IMR-90 (cell line): ENCODE measurements at regions of chr6 and their contacts with region 1.

Region 1: DNA sequence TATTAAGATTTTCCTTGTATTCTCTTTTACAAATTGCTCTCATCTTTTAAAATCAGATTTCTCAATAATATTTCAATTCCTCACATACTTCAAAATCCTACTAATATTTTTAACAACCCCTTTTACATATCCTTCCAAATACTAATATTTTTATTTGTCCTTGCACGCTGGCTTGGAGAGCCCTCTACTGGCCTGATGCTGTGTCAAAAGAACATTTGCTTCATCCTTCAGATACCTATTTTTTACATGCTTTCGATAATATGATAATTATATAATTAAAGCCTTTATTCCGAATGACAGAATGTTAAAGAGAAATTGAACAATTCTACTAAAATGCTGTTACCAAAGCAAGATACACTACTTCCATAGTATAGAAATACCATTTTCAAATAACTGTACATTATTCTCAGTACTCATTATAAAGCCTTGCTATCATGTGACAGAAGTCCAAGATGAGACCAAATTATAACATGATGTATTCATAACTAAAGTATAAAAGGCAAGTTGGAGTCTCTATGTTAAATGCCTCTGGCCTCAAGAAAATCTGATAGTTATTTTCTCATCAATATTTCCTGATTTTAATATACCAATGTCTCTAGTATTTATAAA is 39.0 kb upstream of the PLN start:
- DNase-seq: peak; percentile 55
- ATAC-seq: 0 out of 2 replicates have a peak, but pooled peaks have one; percentile 48
- H3K4me3 ChIP-seq: no peak overlapping the region
- H3K27ac ChIP-seq: no peak overlapping the region
- H3K4me1 ChIP-seq: no peaks in the 10 kb centered on the region
- H3K27me3 ChIP-seq: no peaks in the 10 kb centered on the region
- CTCF ChIP-seq: peak; percentile 79
- POLR2A ChIP-seq: no peak
- RAD21 ChIP-seq: peak; percentile 73

Region 2: GRCh38 chr6:118580585-118581419 is 71.7 kb after region 1 on chr6:
- CTCF ChIA-PET with region 1: no interaction called
- POLR2A ChIA-PET with region 1: no interaction called
- dilution Hi-C with region 1: no loop called
- in situ Hi-C with region 1: no loop called
- intact Hi-C with region 1: loop called (anchors 1 kb)
- DNase-seq: peak; percentile 78
- ATAC-seq: peak; percentile 76
- H3K4me3 ChIP-seq: no peak overlapping the region
- H3K27ac ChIP-seq: no peak overlapping the region
- H3K4me1 ChIP-seq: peaks cover 8% of the 10 kb centered on the region
- H3K27me3 ChIP-seq: no peaks in the 10 kb centered on the region
- CTCF ChIP-seq: peak; percentile 77
- POLR2A ChIP-seq: no peak
- RAD21 ChIP-seq: peak; percentile 80

Region 3: DNA sequence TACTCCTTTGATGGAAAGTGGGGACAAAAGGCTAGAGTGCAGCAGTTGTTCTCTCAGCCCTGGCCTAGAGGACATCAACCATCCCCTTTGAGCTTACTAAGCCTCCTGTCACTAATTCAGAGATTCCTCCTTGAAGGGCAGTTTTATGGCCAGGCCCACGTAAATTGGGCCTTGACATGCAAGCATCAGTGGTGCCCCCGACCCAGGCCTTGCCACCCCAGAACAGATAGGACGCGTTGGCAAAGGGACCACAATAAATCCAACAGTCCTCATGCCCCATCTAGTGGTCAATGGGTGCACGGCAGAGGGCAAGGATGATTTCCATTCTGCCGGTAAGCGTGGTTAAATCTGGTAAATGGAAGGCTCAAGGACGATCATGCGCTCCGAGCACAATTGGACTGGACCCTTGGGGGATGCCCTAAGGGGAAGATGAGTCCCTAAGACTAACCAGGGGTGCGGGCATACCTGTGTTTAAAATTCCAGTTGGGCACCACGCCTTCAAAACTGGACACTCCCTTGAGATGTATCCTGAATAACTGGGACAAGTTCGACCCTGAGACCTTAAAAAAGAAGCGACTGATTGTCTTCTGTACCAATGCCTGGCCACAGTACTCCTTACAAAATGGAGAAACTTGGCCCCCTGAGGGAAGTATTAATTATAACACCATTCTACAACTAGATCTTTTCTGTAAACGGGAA is 109.7 kb after region 1 on chr6:
- CTCF ChIA-PET with region 1: no interaction called
- POLR2A ChIA-PET with region 1: no interaction called
- dilution Hi-C with region 1: no loop called
- in situ Hi-C with region 1: no loop called
- intact Hi-C with region 1: loop called (anchors 1 kb)
- DNase-seq: peak; percentile 26
- ATAC-seq: peak; percentile 94
- H3K4me3 ChIP-seq: no peak overlapping the region
- H3K27ac ChIP-seq: no peak overlapping the region
- H3K4me1 ChIP-seq: no peaks in the 10 kb centered on the region
- H3K27me3 ChIP-seq: no peaks in the 10 kb centered on the region
- CTCF ChIP-seq: peak; percentile 70
- POLR2A ChIP-seq: no peak
- RAD21 ChIP-seq: peak; percentile 76

Region 4: DNA sequence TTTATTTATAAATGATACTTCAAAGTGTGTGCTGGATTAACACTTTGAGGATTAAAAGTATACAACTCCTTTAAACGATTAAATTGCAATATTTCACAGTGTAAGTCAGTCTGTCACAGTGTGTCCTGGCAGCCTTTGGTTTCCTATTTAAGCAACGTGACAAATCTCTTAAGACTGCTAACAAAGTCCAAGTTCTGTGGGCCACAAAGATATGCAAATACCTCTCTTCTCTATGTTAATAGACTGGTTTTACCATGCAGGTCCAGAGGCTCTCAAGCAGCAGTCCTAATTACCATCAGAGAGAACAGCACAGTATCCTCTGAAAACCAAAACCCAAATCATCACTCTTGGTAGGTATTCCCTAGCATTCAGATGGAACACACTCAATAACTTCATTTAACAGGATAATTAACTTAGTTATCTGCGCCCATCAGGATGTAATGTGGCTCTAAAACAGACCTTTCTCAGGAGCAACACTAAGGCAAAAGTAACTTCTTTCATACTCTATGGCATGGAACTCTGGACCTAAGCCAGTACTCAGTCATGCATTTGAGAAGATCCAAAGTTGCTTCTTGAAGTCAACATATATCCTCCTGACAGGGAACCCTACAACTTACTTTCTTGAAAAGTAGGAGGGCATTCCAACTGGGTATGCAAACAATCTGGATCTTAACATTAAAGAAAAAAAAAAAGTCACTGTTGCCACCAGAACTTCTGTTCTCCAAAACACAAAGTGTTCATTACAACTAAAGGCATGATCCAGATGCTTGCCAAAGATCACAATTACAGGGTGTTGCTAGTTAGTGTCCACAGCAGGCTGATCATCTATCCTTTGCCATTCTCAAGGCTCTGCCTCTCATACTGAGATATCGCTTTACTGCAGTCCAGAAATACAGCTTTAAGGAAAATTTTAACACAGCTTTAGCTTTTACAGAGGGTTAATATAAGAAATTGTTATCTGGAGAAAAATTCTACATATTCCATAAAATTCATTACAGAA is 787.2 kb after region 1 on chr6:
- CTCF ChIA-PET with region 1: no interaction called
- POLR2A ChIA-PET with region 1: no interaction called
- dilution Hi-C with region 1: no loop called
- in situ Hi-C with region 1: no loop called
- intact Hi-C with region 1: no loop called
- DNase-seq: no peak
- ATAC-seq: peak; percentile 24; the same call in 1 of the 2 replicates
- H3K4me3 ChIP-seq: no peak overlapping the region
- H3K27ac ChIP-seq: no peak overlapping the region
- H3K4me1 ChIP-seq: no peaks in the 10 kb centered on the region
- H3K27me3 ChIP-seq: no peaks in the 10 kb centered on the region
- CTCF ChIP-seq: no peak
- POLR2A ChIP-seq: no peak
- RAD21 ChIP-seq: no peak